ENCODE measurements at regions of chr12 and their contacts with region 1.

Region 1: DNA sequence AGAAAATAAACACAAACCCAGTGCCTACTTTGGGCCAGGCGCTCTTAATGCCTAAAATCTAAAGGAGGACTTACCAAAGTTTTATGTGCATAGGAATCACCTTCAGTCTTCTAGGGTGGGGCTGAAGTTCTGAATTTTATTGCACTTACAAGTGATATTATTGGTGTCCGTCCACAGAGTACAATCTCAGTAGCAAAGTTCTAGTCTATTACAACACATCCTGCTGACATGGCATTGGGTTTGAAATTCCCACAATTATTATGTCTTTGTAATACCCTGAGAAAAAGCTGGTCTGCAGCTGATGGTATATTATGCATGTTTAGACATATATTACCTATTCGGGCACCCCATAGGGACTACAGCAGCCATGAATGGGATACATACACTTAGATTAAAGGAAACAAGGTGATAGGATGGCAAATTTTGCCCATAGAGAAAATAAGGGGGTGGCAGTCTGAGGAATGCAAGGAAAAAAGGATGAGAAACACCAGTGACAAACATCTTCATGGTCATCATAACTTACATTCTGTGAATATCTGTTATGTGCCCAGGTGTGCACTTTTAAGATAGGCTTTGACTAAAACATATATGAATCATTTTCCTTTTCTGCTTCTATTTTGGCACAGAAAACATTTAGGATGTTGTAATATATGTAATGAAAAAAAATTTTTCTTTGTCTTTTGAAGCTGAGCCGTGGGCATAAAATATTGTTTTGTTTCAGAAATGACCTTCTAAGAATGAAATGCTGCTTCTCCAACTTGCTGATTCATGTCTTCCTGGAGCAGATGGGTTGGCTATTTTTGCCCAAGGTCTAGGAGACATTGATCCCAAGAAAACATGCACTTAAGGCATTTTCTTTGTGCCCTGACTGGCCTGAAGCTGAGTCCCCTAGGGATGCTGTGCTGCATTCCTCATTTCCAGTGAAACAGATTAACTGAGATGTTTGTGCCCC is 27.2 kb upstream of the ALG10 start:
- DNase-seq: no peak
- ATAC-seq: no peak
- H3K4me3 ChIP-seq: no peak overlapping the region
- H3K27ac ChIP-seq: no peak overlapping the region
- H3K4me1 ChIP-seq: no peaks in the 10 kb centered on the region
- H3K27me3 ChIP-seq: no peaks in the 10 kb centered on the region
- CTCF ChIP-seq: no peak
- POLR2A ChIP-seq: no peak

Region 2: DNA sequence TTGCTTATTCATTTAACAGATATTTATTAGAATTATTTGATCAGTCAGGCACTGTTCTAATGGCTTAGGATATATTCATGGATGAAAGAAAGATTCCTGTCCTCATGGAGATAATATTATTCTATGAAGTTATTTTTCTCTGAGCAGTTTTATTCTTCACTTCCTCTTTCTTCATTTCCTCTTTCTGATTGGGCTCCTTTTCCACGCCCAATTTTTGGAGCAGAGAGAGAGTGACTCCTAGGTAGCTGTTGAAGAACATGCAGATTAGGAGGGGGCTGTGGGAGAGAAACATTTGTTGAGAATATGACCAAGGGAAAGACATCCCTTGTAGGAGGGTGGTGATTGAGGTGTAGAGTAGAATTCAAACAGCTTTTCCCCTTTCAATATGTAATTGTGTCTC is 1233.4 kb before region 1 on chr12:
- intact Hi-C with region 1: loop called (anchors 10 kb)
- DNase-seq: no peak
- ATAC-seq: no peak
- H3K4me3 ChIP-seq: no peak overlapping the region
- H3K27ac ChIP-seq: no peak overlapping the region
- H3K4me1 ChIP-seq: no peaks in the 10 kb centered on the region
- H3K27me3 ChIP-seq: no peaks in the 10 kb centered on the region
- CTCF ChIP-seq: no peak
- POLR2A ChIP-seq: no peak

Region 3: GRCh38 chr12:33926095-33926494 is 69.0 kb before region 1 on chr12:
- intact Hi-C with region 1: no loop called
- DNase-seq: no peak
- ATAC-seq: no peak
- H3K4me3 ChIP-seq: no peak overlapping the region
- H3K27ac ChIP-seq: no peak overlapping the region
- H3K4me1 ChIP-seq: no peaks in the 10 kb centered on the region
- H3K27me3 ChIP-seq: no peaks in the 10 kb centered on the region
- CTCF ChIP-seq: no peak
- POLR2A ChIP-seq: no peak

Region 4: GRCh38 chr12:34054938-34055337 is 59.8 kb after region 1 on chr12:
- intact Hi-C with region 1: no loop called
- DNase-seq: no peak
- ATAC-seq: no peak
- H3K4me3 ChIP-seq: no peak overlapping the region
- H3K27ac ChIP-seq: no peak overlapping the region
- H3K4me1 ChIP-seq: no peaks in the 10 kb centered on the region
- H3K27me3 ChIP-seq: no peaks in the 10 kb centered on the region
- CTCF ChIP-seq: no peak
- POLR2A ChIP-seq: no peak

Region 5: GRCh38 chr12:34107781-34108404 is 112.8 kb after region 1 on chr12:
- intact Hi-C with region 1: no loop called
- DNase-seq: no peak
- ATAC-seq: peak; percentile 9
- H3K4me3 ChIP-seq: no peak overlapping the region
- H3K27ac ChIP-seq: no peak overlapping the region
- H3K4me1 ChIP-seq: no peaks in the 10 kb centered on the region
- H3K27me3 ChIP-seq: no peaks in the 10 kb centered on the region
- CTCF ChIP-seq: no peak
- POLR2A ChIP-seq: no peak